ENCODE measurements at regions of chr1 and their contacts with region 1.

Region 1: GRCh38 chr1:182955596-182956588 is 2.9 kb upstream of the SHCBP1L start:
- DNase-seq: peak in 1 of 2 donors; percentile 21
- ATAC-seq: peak in 1 of 2 donors; percentile 51
- H3K4me3 ChIP-seq: no peak overlapping the region
- H3K27ac ChIP-seq: no peak overlapping the region
- H3K4me1 ChIP-seq: no peaks in the 10 kb centered on the region
- H3K27me3 ChIP-seq: peaks cover 14 to 24% (median 17%) of the 10 kb centered on the region in 3 donors
- CTCF ChIP-seq: no peak
- POLR2A ChIP-seq: no peak

Region 2: GRCh38 chr1:182869241-182869666 is 86.6 kb before region 1 on chr1:
- in situ Hi-C with region 1: no loop called
- intact Hi-C with region 1: no loop called
- DNase-seq: no peak
- ATAC-seq: no peak
- H3K4me3 ChIP-seq: no peak overlapping the region
- H3K27ac ChIP-seq: no peak overlapping the region
- H3K4me1 ChIP-seq: no peaks in the 10 kb centered on the region
- H3K27me3 ChIP-seq: no peaks in the 10 kb centered on the region
- CTCF ChIP-seq: no peak
- POLR2A ChIP-seq: no peak

Region 3: GRCh38 chr1:183023601-183024316 is 67.9 kb after region 1 on chr1:
- in situ Hi-C with region 1: loop called in 3 of 4 experiments (anchors 5 to 10 kb)
- intact Hi-C with region 1: no loop called
- DNase-seq: peak; percentile 85
- ATAC-seq: peak; percentile 57 to 61
- H3K4me3 ChIP-seq: peak overlapping the region; percentile 76 to 91 (median 85)
- H3K27ac ChIP-seq: peak overlapping the region; percentile 94 to 100 (median 98)
- H3K4me1 ChIP-seq: peaks cover 48 to 64% of the 10 kb centered on the region in 2 donors
- H3K27me3 ChIP-seq: no peaks in the 10 kb centered on the region
- CTCF ChIP-seq: peak; percentile 62 to 81 (median 78)
- POLR2A ChIP-seq: peak; percentile 46 to 60

Region 4: DNA sequence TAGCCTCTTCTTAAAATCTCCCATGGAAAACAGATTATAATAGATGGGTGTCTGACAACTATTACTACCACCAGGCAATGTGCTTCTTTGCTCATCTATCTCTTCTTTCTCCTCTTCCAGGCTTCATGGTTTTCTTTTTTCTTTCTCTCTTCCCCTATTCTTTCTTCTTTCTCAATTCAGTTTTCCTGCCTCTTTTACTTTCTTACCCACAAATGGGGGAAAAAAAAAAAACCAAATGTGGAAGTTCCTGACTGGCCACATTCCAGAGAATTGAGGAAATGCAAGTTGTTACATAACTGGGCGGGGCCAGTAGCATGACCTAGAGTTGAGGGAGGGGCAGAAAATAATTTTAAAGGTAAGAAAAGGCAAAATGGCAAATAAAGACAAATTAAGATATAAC is 505.5 kb after region 1 on chr1:
- in situ Hi-C with region 1: no loop called
- intact Hi-C with region 1: loop called (anchors 10 kb)
- DNase-seq: no peak
- ATAC-seq: no peak
- H3K4me3 ChIP-seq: no peak overlapping the region
- H3K27ac ChIP-seq: no peak overlapping the region
- H3K4me1 ChIP-seq: no peaks in the 10 kb centered on the region
- H3K27me3 ChIP-seq: peaks cover 0 to 6% (median 3%) of the 10 kb centered on the region in 3 donors
- CTCF ChIP-seq: no peak
- POLR2A ChIP-seq: no peak